ENCODE measurements at regions of chr15 and their contacts with region 1.

Region 1: GRCh38 chr15:92968926-92969651 is 69.0 kb downstream of the CHD2 start:
- DNase-seq: no peak
- ATAC-seq: peak; percentile 23
- H3K4me3 Mint-ChIP-seq: no peak overlapping the region
- H3K27ac Mint-ChIP-seq: peak overlapping the region; percentile 42
- H3K4me1 Mint-ChIP-seq: peaks cover 13% of the 10 kb centered on the region
- H3K27me3 Mint-ChIP-seq: no peaks in the 10 kb centered on the region

Region 2: DNA sequence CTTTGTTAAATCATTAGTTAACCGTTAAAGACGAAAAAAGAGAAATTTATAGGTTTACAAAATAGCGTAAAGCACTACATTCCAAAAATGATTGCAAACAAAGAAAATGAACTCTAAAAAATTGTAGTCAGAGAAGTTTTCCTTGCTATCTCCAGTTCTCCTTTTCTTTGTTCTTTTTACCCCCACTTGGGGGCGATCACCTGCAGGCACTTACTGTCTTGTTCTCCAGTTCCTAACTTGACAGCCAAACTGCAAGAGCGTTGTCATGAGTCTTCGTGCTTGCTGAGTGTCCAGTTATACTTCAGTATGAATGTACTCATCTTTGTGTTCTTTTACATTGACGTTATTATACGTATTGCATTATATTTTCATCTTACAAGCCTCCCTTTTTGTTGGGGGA is 14.5 kb before region 1 on chr15:
- CTCF ChIA-PET with region 1: interaction called, 11 read pairs
- POLR2A ChIA-PET with region 1: no interaction called
- intact Hi-C with region 1: no loop called
- DNase-seq: peak; percentile 28
- ATAC-seq: no peak
- H3K4me3 Mint-ChIP-seq: no peak overlapping the region
- H3K27ac Mint-ChIP-seq: no peak overlapping the region
- H3K4me1 Mint-ChIP-seq: peaks cover 33% of the 10 kb centered on the region
- H3K27me3 Mint-ChIP-seq: no peaks in the 10 kb centered on the region

Region 3: GRCh38 chr15:92979011-92979701 is 10.1 kb after region 1 on chr15:
- CTCF ChIA-PET with region 1: interaction called, 7 read pairs
- POLR2A ChIA-PET with region 1: no interaction called
- intact Hi-C with region 1: loop called in 1 of 2 experiments (anchors 2 kb)
- DNase-seq: no peak
- ATAC-seq: no peak
- H3K4me3 Mint-ChIP-seq: no peak overlapping the region
- H3K27ac Mint-ChIP-seq: peak overlapping the region; percentile 44
- H3K4me1 Mint-ChIP-seq: peaks cover 8% of the 10 kb centered on the region
- H3K27me3 Mint-ChIP-seq: no peaks in the 10 kb centered on the region

Region 4: GRCh38 chr15:93030430-93031105 is 61.5 kb after region 1 on chr15:
- CTCF ChIA-PET with region 1: no interaction called
- POLR2A ChIA-PET with region 1: no interaction called
- intact Hi-C with region 1: no loop called
- DNase-seq: peak; percentile 79
- ATAC-seq: peak; percentile 87
- H3K4me3 Mint-ChIP-seq: no peak overlapping the region
- H3K27ac Mint-ChIP-seq: peak overlapping the region; percentile 16
- H3K4me1 Mint-ChIP-seq: peaks cover 37% of the 10 kb centered on the region
- H3K27me3 Mint-ChIP-seq: no peaks in the 10 kb centered on the region